ENCODE measurements at regions of chr6 and their contacts with region 1.

Region 1: GRCh38 chr6:153231048-153231646 is 100.1 kb upstream of the RGS17 start:
- DNase-seq: peak in 3 of 4 experiments; percentile 7 to 14 (median 7)
- ATAC-seq: no peak
- H3K4me3 ChIP-seq: no peak overlapping the region
- H3K27ac ChIP-seq: no peak overlapping the region
- H3K4me1 ChIP-seq: no peaks in the 10 kb centered on the region
- H3K27me3 ChIP-seq: no peaks in the 10 kb centered on the region
- CTCF ChIP-seq: peak; percentile 33 to 58 (median 39)
- EP300 ChIP-seq: no peak
- POLR2A ChIP-seq: no peak
- RAD21 ChIP-seq: peak in 1 of 2 experiments; percentile 62; a peak in 2 of 4 replicates

Region 2: DNA sequence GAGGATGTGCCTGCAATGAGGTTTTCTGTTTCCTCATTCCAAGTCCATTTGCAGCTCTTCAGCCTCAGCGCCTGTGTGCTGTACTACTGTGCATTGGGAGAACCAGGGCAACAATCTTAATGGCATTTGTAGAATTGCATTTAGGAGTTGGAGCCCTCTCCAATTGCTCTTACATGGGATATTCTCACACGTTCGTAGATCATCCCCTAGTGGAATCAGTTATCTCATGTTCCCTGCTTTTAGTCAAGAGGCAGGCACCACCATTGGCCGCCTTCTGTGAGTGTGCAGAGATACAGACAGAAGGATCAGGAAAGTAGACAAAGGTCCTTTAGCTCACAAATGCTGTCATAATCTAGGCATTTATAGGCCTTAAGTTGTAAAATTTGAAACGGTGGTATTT is 15.9 kb before region 1 on chr6:
- CTCF ChIA-PET with region 1: no interaction called
- POLR2A ChIA-PET with region 1: no interaction called
- in situ Hi-C with region 1: no loop called
- intact Hi-C with region 1: no loop called
- DNase-seq: no peak
- ATAC-seq: no peak
- H3K4me3 ChIP-seq: no peak overlapping the region
- H3K27ac ChIP-seq: no peak overlapping the region
- H3K4me1 ChIP-seq: no peaks in the 10 kb centered on the region
- H3K27me3 ChIP-seq: no peaks in the 10 kb centered on the region
- CTCF ChIP-seq: no peak
- EP300 ChIP-seq: no peak
- POLR2A ChIP-seq: no peak
- RAD21 ChIP-seq: no peak

Region 3: GRCh38 chr6:153328169-153328568 is 97.0 kb after region 1 on chr6:
- CTCF ChIA-PET with region 1: no interaction called
- POLR2A ChIA-PET with region 1: no interaction called
- in situ Hi-C with region 1: no loop called
- intact Hi-C with region 1: no loop called
- DNase-seq: no peak
- ATAC-seq: no peak
- H3K4me3 ChIP-seq: no peak overlapping the region
- H3K27ac ChIP-seq: no peak overlapping the region
- H3K4me1 ChIP-seq: no peaks in the 10 kb centered on the region
- H3K27me3 ChIP-seq: no peaks in the 10 kb centered on the region
- CTCF ChIP-seq: no peak
- EP300 ChIP-seq: no peak
- POLR2A ChIP-seq: no peak
- RAD21 ChIP-seq: no peak

Region 4: GRCh38 chr6:153503810-153504209 is 272.7 kb after region 1 on chr6:
- CTCF ChIA-PET with region 1: no interaction called
- POLR2A ChIA-PET with region 1: no interaction called
- in situ Hi-C with region 1: no loop called
- intact Hi-C with region 1: loop called (anchors 10 kb)
- DNase-seq: peak in 1 of 4 experiments; percentile 2
- ATAC-seq: no peak
- H3K4me3 ChIP-seq: no peak overlapping the region
- H3K27ac ChIP-seq: no peak overlapping the region
- H3K4me1 ChIP-seq: no peaks in the 10 kb centered on the region
- H3K27me3 ChIP-seq: no peaks in the 10 kb centered on the region
- CTCF ChIP-seq: no peak
- EP300 ChIP-seq: no peak
- POLR2A ChIP-seq: no peak
- RAD21 ChIP-seq: no peak

Region 5: DNA sequence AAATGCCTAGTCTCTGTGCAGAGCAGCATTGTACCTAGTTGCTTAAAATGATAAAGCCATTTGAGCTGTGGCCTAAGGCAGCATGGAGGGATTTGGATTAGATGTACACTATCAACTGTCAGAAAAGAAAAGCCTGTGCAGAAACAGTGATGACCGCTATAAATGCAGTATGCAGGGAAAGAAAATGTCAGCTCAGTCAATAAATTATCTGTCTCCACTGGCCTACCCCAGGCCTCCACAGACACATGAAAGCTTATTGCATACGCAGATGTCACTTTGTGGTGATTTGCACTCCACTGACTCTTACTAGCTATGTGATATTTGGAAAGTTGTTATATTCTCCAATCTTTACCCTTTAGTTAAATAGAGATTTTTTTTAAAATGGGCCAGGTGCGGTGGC is 586.0 kb after region 1 on chr6:
- CTCF ChIA-PET with region 1: no interaction called
- POLR2A ChIA-PET with region 1: no interaction called
- in situ Hi-C with region 1: no loop called
- intact Hi-C with region 1: no loop called
- DNase-seq: no peak
- ATAC-seq: no peak
- H3K4me3 ChIP-seq: no peak overlapping the region
- H3K27ac ChIP-seq: no peak overlapping the region
- H3K4me1 ChIP-seq: no peaks in the 10 kb centered on the region
- H3K27me3 ChIP-seq: no peaks in the 10 kb centered on the region
- CTCF ChIP-seq: no peak
- EP300 ChIP-seq: no peak
- POLR2A ChIP-seq: no peak
- RAD21 ChIP-seq: no peak

Region 6: DNA sequence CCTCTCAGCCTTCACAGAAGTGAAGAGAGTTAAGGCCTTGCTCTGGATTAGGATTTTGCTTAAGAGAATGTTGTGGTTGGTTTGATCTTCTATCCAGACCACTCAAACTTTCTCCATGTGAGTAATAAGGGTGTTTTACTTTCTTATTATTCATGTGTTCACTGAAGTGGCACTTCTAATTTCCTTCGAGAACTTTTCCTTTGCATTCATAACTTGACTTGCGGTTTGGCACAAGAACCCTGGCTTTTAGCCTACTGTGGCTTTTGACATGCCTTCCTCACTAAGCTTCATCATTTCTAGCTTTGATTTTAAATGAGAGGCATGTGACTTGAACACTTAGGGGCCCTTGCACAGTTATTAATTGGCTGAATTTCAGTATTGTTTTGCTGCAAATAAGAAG is 641.8 kb after region 1 on chr6:
- CTCF ChIA-PET with region 1: no interaction called
- POLR2A ChIA-PET with region 1: no interaction called
- in situ Hi-C with region 1: no loop called
- intact Hi-C with region 1: no loop called
- DNase-seq: no peak
- ATAC-seq: no peak
- H3K4me3 ChIP-seq: no peak overlapping the region
- H3K27ac ChIP-seq: no peak overlapping the region
- H3K4me1 ChIP-seq: no peaks in the 10 kb centered on the region
- H3K27me3 ChIP-seq: no peaks in the 10 kb centered on the region
- CTCF ChIP-seq: no peak
- EP300 ChIP-seq: no peak
- POLR2A ChIP-seq: no peak
- RAD21 ChIP-seq: no peak

Region 7: DNA sequence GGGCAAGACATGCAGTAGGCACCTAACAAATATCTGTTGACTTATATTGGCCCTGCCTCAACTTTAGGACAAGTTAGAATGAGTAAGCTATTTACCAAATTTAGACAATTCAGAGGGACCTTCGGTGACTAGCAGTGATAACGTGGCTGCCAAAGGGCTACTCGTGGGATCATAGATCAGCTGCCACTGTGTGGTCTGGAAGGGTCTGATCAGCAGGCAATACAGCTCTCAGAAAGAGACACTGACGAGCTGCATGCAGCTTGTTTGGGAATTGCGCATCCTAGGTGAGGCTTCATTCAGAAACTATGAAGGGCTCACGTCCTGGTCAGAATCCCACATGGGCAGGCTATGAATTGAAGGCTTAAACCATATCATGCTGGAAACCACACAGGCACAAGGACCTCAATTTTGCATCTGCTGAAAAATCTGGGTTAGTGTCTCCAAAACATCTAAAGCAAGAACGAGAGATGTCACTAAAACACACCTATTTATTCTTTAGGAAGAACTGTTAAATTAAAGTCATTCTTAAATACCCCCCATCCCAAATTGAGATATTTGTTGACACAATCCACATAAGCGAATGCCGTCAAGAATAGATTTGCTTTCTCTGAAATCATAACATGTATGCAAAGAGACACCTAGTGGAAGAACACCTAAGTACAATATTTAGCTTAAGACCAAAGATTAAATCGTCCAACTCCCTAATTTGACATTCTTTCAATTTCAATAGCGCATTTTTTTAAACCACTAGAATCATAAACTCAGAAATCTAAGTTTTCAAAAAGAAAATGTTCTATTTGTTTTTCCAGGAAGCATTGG is 1045.9 kb after region 1 on chr6:
- CTCF ChIA-PET with region 1: no interaction called
- POLR2A ChIA-PET with region 1: no interaction called
- in situ Hi-C with region 1: no loop called
- intact Hi-C with region 1: loop called (anchors 5 kb)
- DNase-seq: peak; percentile 20 to 38 (median 25)
- ATAC-seq: peak; percentile 78
- H3K4me3 ChIP-seq: no peak overlapping the region
- H3K27ac ChIP-seq: no peak overlapping the region
- H3K4me1 ChIP-seq: no peaks in the 10 kb centered on the region
- H3K27me3 ChIP-seq: no peaks in the 10 kb centered on the region
- CTCF ChIP-seq: peak; percentile 38 to 68 (median 44); a peak in 4 of 6 replicates
- EP300 ChIP-seq: no peak
- POLR2A ChIP-seq: no peak
- RAD21 ChIP-seq: peak; percentile 42 to 58

Measured in K562 (cell line).